ENCODE measurements at regions of chr10 and their contacts with region 1.

Region 1: GRCh38 chr10:11515596-11516430 is 95.6 kb downstream of the USP6NL start:
- H3K4me3 Mint-ChIP-seq: no peak overlapping the region
- H3K27ac Mint-ChIP-seq: no peak overlapping the region
- H3K4me1 Mint-ChIP-seq: peaks cover 6% of the 10 kb centered on the region
- H3K27me3 Mint-ChIP-seq: no peaks in the 10 kb centered on the region

Region 2: DNA sequence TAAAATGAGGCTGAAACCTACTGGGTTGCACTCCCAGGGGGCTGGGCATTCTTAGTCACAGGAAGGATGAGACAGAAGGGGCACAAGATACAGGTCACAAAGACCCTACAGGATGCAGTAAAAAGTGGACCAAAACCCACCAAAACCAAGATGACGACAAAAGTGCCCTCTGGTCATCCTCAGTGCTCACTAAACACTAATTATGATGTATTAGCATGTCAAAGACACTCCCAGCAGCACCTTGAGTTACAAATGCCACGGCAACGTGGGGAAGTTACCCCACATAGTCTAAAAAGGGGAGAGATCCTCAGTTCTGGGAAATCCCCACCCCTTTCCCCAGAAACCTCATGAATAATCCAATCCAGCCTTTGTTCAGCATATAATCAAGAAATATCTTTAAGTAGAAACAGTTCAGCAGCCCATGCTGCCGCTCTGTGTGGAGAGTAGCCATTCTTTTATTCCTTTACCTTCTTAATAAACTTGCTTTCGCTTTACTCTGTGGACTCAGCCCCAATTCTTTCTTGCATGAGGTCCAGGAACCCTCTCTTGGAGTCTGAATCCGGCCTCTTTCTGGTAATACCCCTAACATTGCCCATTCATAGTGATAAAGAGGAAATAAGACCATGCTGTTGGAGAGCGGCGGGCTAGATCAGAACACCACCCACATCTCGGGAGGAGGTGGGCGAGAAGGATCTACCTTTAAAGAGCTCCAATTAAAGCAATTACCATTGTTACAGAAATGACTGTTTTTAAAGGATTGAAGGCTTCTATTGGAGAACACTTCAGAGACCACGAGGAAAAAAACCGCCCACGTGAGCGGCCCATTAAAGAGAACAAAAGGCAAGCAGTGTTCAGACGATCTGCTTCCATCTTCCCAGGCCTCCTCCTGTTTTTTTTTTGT is 75.3 kb before region 1 on chr10:
- intact Hi-C with region 1: no loop called
- H3K4me3 Mint-ChIP-seq: no peak overlapping the region
- H3K27ac Mint-ChIP-seq: no peak overlapping the region
- H3K4me1 Mint-ChIP-seq: no peaks in the 10 kb centered on the region
- H3K27me3 Mint-ChIP-seq: no peaks in the 10 kb centered on the region

Region 3: GRCh38 chr10:11604865-11605650 is 89.2 kb after region 1 on chr10:
- intact Hi-C with region 1: loop called (anchors 5 kb)
- H3K4me3 Mint-ChIP-seq: no peak overlapping the region
- H3K27ac Mint-ChIP-seq: no peak overlapping the region
- H3K4me1 Mint-ChIP-seq: peaks cover 45% of the 10 kb centered on the region
- H3K27me3 Mint-ChIP-seq: no peaks in the 10 kb centered on the region

Region 4: DNA sequence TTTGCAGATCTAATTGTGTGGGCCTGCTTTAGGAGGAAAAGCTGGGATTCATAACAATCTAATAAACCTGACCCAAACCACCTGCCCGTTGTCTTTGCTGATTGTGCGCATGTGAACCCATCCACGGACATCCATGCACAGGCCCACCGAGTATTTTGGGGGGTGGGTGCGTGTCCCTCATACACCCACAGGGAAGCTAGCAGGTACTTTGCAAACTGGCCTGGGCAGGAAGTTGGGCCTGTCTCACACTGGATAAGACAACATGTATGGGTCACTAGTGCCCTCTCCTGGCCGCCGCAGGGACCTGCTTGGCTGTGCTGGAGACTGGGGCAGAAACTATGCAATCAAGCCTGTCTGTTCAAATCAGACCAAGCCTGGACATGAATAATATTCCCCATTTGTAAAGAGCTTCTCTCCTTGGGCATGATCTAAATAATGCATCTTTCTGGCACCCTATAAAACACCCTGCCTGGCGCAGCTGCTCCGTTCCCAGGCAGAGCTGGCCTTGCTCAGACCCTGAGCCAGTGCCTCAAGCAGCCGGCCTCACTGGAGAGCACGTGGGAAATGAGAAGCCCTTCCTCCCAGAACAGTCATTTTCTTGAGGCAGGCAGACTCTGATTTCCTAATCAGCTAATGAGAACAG is 242.1 kb after region 1 on chr10:
- intact Hi-C with region 1: loop called (anchors 1 kb)
- H3K4me3 Mint-ChIP-seq: no peak overlapping the region
- H3K27ac Mint-ChIP-seq: no peak overlapping the region
- H3K4me1 Mint-ChIP-seq: no peaks in the 10 kb centered on the region
- H3K27me3 Mint-ChIP-seq: no peaks in the 10 kb centered on the region

Measured in dendritic cell treated with granulocyte-macrophage colony-stimulating factor and Interleukin-4, amounts not matched to agents 40 ng/mL and 50 ng/mL, for 4 days (primary cell).